ENCODE measurements at regions of chr12 and their contacts with region 1.

Region 1: GRCh38 chr12:124914412-124915238 is at the start of gene UBC:
- DNase-seq: peak; percentile 93
- ATAC-seq: peak; percentile 81
- H3K4me3 ChIP-seq: peak within 1 kb of the TSS; percentile 88
- H3K27ac ChIP-seq: peak within 1 kb of the TSS; percentile 100
- H3K4me1 ChIP-seq: peaks cover 58% of the 10 kb centered on the region
- H3K27me3 ChIP-seq: no peaks in the 10 kb centered on the region
- CTCF ChIP-seq: no peak
- total RNA-seq, gene UBC: 1,107 TPM

Region 2: GRCh38 chr12:124837958-124838803 is 76.4 kb before region 1 on chr12:
- intact Hi-C with region 1: no loop called
- DNase-seq: no peak
- ATAC-seq: peak; percentile 56
- H3K4me3 ChIP-seq: no peak overlapping the region
- H3K27ac ChIP-seq: no peak overlapping the region
- H3K4me1 ChIP-seq: no peaks in the 10 kb centered on the region
- H3K27me3 ChIP-seq: no peaks in the 10 kb centered on the region
- CTCF ChIP-seq: no peak

Region 3: GRCh38 chr12:124940549-124941527 is 26.2 kb after region 1 on chr12:
- intact Hi-C with region 1: loop called (anchors 2 kb)
- DNase-seq: peak; percentile 95
- ATAC-seq: peak; percentile 91
- H3K4me3 ChIP-seq: peak overlapping the region; percentile 44
- H3K27ac ChIP-seq: peak overlapping the region; percentile 86
- H3K4me1 ChIP-seq: peaks cover 29% of the 10 kb centered on the region
- H3K27me3 ChIP-seq: no peaks in the 10 kb centered on the region
- CTCF ChIP-seq: peak; percentile 93

Region 4: DNA sequence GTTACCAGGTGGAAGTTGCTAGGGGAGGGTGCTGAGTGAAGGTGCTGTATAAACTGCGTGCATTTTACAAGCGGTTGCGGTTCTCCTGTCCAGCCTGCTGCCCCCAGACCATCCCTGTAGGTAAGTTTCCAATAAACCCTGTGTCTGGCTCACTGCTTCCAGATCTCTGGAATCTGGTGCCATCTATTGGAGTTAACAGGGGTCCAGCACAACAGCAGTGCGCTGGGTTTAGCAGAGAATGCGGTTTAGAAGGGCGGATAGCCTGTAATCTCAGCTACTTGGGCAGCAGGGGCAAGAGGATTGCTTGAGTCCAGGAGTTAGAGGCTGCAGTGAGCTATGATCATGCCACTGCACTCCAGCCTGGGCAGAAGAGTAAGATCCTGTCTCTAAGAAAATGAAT is 155.5 kb after region 1 on chr12:
- intact Hi-C with region 1: no loop called
- DNase-seq: no peak
- ATAC-seq: no peak
- H3K4me3 ChIP-seq: no peak overlapping the region
- H3K27ac ChIP-seq: no peak overlapping the region
- H3K4me1 ChIP-seq: peaks cover 4% of the 10 kb centered on the region
- H3K27me3 ChIP-seq: no peaks in the 10 kb centered on the region
- CTCF ChIP-seq: no peak

Region 5: DNA sequence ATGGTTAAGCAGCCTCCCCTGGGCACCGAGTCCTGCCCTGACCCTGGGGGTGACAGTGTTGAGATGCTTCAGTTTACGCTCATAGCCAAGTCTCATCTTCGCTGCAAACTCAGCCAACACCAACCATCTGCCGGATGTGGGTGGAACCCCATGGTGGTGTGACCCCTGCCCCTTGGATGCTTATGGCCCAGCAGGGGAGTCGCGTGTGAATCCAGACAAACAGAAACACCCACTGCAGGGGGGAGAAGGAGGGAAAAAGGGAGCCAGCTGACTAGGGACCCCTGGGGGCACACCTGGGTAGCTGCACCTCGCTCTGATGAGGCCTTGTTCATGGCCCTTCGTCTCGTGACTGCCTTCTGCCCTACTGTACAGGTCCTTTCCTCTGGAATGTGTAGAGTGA is 174.5 kb after region 1 on chr12:
- intact Hi-C with region 1: no loop called
- DNase-seq: no peak
- ATAC-seq: no peak
- H3K4me3 ChIP-seq: no peak overlapping the region
- H3K27ac ChIP-seq: no peak overlapping the region
- H3K4me1 ChIP-seq: peaks cover 5% of the 10 kb centered on the region
- H3K27me3 ChIP-seq: no peaks in the 10 kb centered on the region
- CTCF ChIP-seq: no peak